ENCODE measurements at regions of chr5 and their contacts with region 1.

Region 1: GRCh38 chr5:129767906-129768380 is 20.0 kb downstream of the MINAR2 start:
- DNase-seq: peak in 7 of 10 donors; percentile 22 to 74 (median 64)

Region 2: GRCh38 chr5:128213340-128213739 is 1554.6 kb before region 1 on chr5:
- intact Hi-C with region 1: loop called (anchors 5 kb)
- DNase-seq: peak in 5 of 10 donors; percentile 37 to 77 (median 64)

Region 3: GRCh38 chr5:129113871-129114270 is 654.1 kb before region 1 on chr5:
- intact Hi-C with region 1: loop called (anchors 5 kb)
- DNase-seq: no peak

Region 4: DNA sequence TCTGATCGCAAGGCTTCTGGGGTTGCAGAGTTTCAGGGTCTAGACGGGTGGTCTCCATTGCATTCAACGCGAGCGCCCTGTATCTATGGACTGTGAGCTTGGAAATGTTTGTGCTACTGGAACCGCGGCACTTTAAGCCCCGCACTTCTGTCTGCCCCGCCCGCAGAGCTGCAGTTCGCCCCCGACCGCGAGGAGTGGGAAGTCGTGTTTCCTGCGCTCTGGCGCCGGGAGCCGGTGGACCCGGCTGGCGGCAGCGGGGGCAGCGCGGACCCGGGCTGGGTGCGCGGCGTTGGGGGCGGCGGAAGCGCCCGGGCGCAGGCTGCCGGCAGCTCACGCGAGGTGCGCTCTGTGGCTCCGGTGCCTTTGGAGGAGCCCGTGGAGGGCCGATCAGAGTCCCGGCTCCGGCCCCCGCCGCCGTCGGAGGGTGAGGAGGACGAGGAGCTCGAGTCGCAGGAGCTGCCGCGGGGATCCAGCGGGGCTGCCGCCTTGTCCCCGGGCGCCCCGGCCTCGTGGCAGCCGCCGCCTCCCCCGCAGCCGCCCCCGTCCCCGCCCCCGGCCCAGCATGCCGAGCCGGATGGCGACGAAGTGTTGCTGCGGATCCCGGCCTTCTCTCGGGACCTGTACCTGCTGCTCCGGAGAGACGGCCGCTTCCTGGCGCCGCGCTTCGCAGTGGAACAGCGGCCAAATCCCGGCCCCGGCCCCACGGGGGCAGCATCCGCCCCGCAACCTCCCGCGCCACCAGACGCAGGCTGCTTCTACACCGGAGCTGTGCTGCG is 306.8 kb before region 1 on chr5:
- intact Hi-C with region 1: loop called (anchors 10 kb)
- DNase-seq: peak; percentile 38 to 94 (median 52)

Region 5: DNA sequence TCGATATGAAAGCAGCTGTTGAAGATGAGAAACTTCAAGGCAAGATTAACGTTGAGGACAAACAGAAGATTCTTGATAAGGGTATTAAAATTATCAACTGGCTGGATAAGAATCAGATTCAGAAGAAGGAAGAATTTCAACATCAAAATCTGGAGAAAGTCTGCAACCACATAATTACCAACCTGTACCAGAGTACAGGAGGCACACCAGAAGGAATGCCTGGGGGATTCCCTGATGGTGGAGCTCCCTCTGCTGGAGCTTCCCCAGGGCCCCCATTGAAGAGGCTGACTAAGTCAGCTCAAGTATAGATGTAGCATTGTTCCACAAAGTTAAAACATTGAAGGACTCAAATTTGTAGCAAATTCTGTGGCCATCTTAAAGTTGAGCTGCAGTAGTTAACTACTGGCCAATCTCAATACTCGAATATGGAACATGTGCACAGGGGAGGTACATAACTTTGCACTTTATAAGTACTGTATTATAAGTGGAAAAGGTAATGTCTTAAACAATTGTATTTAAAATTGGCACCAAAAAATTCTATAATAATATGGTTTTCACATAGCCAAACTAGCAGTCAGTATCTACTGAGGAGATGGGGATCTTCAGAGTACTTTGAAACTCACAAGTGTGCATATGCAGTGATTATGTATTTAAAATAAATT is 373.8 kb after region 1 on chr5:
- intact Hi-C with region 1: loop called (anchors 5 kb)
- DNase-seq: peak in 7 of 10 donors; percentile 27 to 89 (median 59)